ENCODE measurements at regions of chr12 and their contacts with region 1.

Region 1: DNA sequence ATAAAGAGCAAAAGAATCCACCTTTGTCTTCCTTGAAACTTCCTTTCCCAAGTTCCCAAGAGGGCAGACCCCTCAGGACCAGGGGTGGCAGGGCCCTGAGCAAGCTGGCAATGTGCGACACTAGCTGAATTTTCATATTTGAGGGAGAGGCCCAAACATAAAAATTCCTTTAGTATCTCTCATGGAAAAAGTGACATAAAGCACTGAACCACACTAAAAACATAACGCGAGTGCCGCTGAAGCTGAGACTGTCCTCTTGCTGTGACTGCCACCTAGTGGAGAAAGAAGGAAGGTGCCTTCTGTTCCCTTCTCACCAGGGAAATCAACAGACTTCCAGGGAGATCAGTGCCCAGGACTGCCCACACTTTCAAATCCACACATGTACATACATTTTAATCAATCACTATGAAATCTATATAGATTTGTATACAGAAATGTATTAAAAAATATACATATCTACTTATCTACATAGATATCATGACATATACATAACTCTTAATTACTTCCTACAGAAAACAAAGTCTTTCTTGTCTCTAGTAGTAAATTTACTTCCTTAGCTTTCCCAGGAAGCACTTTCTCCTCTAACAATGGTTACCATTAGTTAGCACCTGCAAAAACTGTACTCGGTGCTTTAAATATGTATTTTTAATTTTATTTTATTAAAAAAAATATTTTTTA is 53.8 kb downstream of the SSH1 start:
- DNase-seq: peak; percentile 57
- ATAC-seq: peak; percentile 90
- H3K4me3 ChIP-seq: no peak overlapping the region
- H3K27ac ChIP-seq: peak overlapping the region; percentile 41
- H3K4me1 ChIP-seq: peaks cover 9% of the 10 kb centered on the region; the same call in 1 of the 2 replicates
- H3K27me3 ChIP-seq: no peaks in the 10 kb centered on the region
- CTCF ChIP-seq: peak; percentile 90 to 94 (median 91)
- EP300 ChIP-seq: no peak
- POLR2A ChIP-seq: no peak
- RAD21 ChIP-seq: peak; percentile 98

Region 2: GRCh38 chr12:108518083-108518715 is 285.4 kb before region 1 on chr12:
- CTCF ChIA-PET with region 1: no interaction called
- POLR2A ChIA-PET with region 1: no interaction called
- RAD21 ChIA-PET with region 1: no interaction called
- SMC1A ChIA-PET with region 1: no interaction called
- in situ Hi-C with region 1: no loop called
- intact Hi-C with region 1: no loop called
- DNase-seq: no peak
- ATAC-seq: no peak
- H3K4me3 ChIP-seq: no peak overlapping the region
- H3K27ac ChIP-seq: no peak overlapping the region
- H3K4me1 ChIP-seq: peaks cover 9% of the 10 kb centered on the region
- H3K27me3 ChIP-seq: no peaks in the 10 kb centered on the region
- CTCF ChIP-seq: no peak
- EP300 ChIP-seq: no peak
- POLR2A ChIP-seq: peak; percentile 51
- RAD21 ChIP-seq: no peak

Region 3: DNA sequence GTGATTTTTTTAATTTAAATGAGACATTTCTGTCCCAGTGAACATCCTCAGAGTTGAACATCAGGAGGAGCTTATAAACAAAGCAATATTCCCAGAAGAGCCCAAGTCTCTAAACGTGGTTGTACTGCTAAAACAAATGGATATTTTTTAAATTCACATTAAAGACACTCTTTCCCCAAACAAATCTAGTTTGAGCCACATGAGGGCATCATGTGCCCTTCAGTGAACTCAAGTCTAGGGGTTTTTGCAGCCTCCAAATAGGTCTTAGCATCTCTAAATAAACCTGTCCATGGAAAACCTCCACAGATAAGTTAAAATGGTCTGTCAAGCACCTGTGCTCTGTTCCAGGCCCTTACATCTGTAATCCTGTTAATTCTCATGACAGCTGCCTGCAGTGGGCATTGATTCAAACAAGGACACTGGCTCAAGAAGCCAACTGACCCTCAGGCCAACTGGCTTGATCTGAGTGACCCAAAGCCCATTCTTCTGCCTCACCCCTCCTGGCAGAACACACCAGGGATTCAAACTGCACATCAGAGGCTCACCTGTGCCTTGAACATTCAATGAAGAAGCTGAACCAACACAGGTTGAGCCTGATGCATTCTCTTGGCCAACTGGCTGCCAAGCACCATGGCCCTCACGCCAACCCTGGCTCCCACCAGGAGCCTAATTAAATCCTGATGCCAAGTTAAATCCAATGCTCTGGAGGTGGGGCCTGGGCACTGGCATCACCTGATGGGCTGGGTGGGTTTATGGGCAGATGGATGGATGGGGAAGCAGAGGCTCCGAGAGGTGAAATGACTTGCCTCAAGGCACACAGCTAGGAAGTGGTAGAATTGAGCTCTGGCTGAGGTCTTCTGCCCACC is 232.6 kb before region 1 on chr12:
- CTCF ChIA-PET with region 1: interaction called, 137 read pairs
- POLR2A ChIA-PET with region 1: interaction called, 5 read pairs
- RAD21 ChIA-PET with region 1: interaction called, 44 read pairs
- SMC1A ChIA-PET with region 1: interaction called, 115 read pairs
- in situ Hi-C with region 1: loop called (anchors 5 kb)
- intact Hi-C with region 1: no loop called
- DNase-seq: no peak
- ATAC-seq: no peak
- H3K4me3 ChIP-seq: no peak overlapping the region
- H3K27ac ChIP-seq: peak overlapping the region; percentile 100
- H3K4me1 ChIP-seq: peaks cover 89% of the 10 kb centered on the region
- H3K27me3 ChIP-seq: no peaks in the 10 kb centered on the region
- CTCF ChIP-seq: peak; percentile 42 to 53 (median 49); a peak in 4 of 6 replicates
- EP300 ChIP-seq: 0 out of 4 replicates have a peak, but pooled peaks of 1 of the 2 experiments have one; percentile 10
- POLR2A ChIP-seq: no peak
- RAD21 ChIP-seq: peak; percentile 66

Region 4: DNA sequence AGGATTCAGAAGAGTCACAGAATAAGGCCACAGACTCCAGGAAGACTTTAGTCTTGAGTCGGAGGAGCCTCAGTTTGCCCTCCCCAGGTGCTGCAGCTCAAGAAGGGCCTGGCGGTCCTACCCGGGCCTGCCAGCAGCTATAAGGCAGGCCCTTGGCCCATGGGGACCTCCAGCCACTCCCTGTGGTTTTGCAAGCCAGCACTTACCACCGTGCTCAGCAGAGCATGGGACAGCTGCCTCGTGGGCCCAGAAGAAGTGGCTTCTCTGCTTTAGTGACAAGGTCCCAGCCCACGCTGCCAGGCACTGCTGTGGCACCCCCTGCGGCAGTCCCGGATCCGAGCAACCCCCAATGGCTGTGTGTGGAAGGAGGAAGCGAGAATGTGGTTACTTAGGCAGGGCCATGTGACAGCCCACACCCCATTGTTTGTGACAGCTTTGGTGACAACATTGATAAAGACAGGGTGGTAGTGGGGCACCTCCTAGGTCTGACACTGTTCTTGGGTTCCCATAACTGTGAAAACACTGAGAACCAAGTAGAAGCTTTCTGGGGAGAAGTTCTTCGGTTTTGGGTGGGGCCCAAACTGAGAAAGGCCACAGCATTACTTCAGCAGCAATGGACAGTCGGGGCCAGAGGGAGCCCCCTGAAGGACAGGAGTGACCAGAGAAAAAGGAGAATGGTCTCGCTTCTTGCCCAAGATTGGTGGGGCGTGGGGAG is 169.9 kb before region 1 on chr12 and contains the start of gene SELPLG:
- CTCF ChIA-PET with region 1: interaction called, 5 read pairs
- POLR2A ChIA-PET with region 1: interaction called, 3 read pairs
- RAD21 ChIA-PET with region 1: interaction called, 18 read pairs
- SMC1A ChIA-PET with region 1: interaction called, 27 read pairs
- in situ Hi-C with region 1: no loop called
- intact Hi-C with region 1: no loop called
- DNase-seq: peak; percentile 99
- ATAC-seq: peak; percentile 64
- H3K4me3 ChIP-seq: peak within 1 kb of the TSS; percentile 76
- H3K27ac ChIP-seq: peak within 1 kb of the TSS; percentile 86
- H3K4me1 ChIP-seq: peaks cover 87% of the 10 kb centered on the region
- H3K27me3 ChIP-seq: no peaks in the 10 kb centered on the region
- CTCF ChIP-seq: peak; percentile 32 to 41 (median 36); a peak in 3 of 6 replicates
- EP300 ChIP-seq: peak; percentile 99
- POLR2A ChIP-seq: peak; percentile 77
- RAD21 ChIP-seq: no peak; the same call in 1 of the 2 replicates
- polyA plus RNA-seq, gene SELPLG: 3.2 to 5.3 TPM

Region 5: DNA sequence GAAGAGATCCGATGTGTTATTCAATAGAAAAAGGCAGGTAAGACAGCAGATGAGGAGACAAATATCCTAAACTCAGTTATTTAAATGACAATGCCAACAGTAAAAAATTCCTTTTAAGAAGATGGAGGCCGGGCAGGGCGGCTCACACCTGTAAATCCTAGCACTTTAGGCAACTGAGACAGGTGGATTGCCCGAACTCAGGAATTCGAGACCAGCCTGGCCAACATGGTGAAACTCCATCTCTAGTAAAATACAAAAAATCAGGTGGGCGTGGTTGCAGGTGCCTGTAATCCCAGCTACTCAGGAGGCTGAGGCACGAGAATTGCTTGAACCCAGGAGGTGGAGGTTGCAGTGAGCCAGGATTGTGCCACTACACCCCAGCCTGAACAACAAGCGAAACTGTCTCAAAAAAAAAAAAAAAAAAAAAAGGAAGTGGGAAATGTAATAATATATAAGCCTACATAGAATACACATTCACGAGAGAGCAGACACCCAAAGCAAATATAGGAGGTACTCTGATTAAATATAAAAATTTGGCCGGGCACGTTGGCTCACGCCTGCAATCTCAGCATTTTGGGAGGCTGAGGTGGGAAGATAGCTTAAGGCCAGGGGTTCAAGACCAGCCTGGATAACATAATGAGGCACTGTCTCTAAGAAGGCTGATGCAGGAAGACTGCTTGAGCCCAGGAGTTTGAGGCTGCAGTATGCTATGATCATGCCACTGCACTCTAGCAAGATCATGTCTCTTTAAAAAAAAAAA is 91.2 kb before region 1 on chr12:
- CTCF ChIA-PET with region 1: interaction called, 4 read pairs
- POLR2A ChIA-PET with region 1: no interaction called
- RAD21 ChIA-PET with region 1: no interaction called
- SMC1A ChIA-PET with region 1: interaction called, 10 read pairs
- in situ Hi-C with region 1: no loop called
- intact Hi-C with region 1: no loop called
- DNase-seq: no peak
- ATAC-seq: peak; percentile 80
- H3K4me3 ChIP-seq: no peak overlapping the region
- H3K27ac ChIP-seq: peak overlapping the region; percentile 20; the same call in 1 of the 2 replicates
- H3K4me1 ChIP-seq: peaks cover 36% of the 10 kb centered on the region
- H3K27me3 ChIP-seq: no peaks in the 10 kb centered on the region
- CTCF ChIP-seq: no peak
- EP300 ChIP-seq: no peak
- POLR2A ChIP-seq: no peak
- RAD21 ChIP-seq: no peak

Region 6: GRCh38 chr12:108816652-108817335 is 13.2 kb after region 1 on chr12:
- CTCF ChIA-PET with region 1: interaction called, 33 read pairs
- POLR2A ChIA-PET with region 1: interaction called, 8 read pairs
- RAD21 ChIA-PET with region 1: interaction called, 3 read pairs
- SMC1A ChIA-PET with region 1: interaction called, 24 read pairs
- in situ Hi-C with region 1: no loop called
- intact Hi-C with region 1: no loop called
- DNase-seq: no peak
- ATAC-seq: no peak
- H3K4me3 ChIP-seq: no peak overlapping the region
- H3K27ac ChIP-seq: no peak overlapping the region
- H3K4me1 ChIP-seq: peaks cover 12% of the 10 kb centered on the region
- H3K27me3 ChIP-seq: no peaks in the 10 kb centered on the region
- CTCF ChIP-seq: no peak
- EP300 ChIP-seq: no peak
- POLR2A ChIP-seq: no peak
- RAD21 ChIP-seq: no peak

Region 7: GRCh38 chr12:108850854-108851573 is 47.4 kb after region 1 on chr12:
- CTCF ChIA-PET with region 1: interaction called, 32 read pairs
- POLR2A ChIA-PET with region 1: no interaction called
- RAD21 ChIA-PET with region 1: interaction called, 27 read pairs
- SMC1A ChIA-PET with region 1: interaction called, 22 read pairs
- in situ Hi-C with region 1: no loop called
- intact Hi-C with region 1: loop called (anchors 1 kb)
- DNase-seq: peak; percentile 79
- ATAC-seq: peak; percentile 82
- H3K4me3 ChIP-seq: no peak overlapping the region
- H3K27ac ChIP-seq: peak overlapping the region; percentile 74
- H3K4me1 ChIP-seq: peaks cover 36% of the 10 kb centered on the region
- H3K27me3 ChIP-seq: no peaks in the 10 kb centered on the region
- CTCF ChIP-seq: peak in 2 of 3 experiments; percentile 27 to 56; a peak in 4 of 6 replicates
- EP300 ChIP-seq: peak; percentile 66 to 84; a peak in 3 of 4 replicates
- POLR2A ChIP-seq: no peak
- RAD21 ChIP-seq: peak; percentile 67; the same call in 1 of the 2 replicates

Region 8: DNA sequence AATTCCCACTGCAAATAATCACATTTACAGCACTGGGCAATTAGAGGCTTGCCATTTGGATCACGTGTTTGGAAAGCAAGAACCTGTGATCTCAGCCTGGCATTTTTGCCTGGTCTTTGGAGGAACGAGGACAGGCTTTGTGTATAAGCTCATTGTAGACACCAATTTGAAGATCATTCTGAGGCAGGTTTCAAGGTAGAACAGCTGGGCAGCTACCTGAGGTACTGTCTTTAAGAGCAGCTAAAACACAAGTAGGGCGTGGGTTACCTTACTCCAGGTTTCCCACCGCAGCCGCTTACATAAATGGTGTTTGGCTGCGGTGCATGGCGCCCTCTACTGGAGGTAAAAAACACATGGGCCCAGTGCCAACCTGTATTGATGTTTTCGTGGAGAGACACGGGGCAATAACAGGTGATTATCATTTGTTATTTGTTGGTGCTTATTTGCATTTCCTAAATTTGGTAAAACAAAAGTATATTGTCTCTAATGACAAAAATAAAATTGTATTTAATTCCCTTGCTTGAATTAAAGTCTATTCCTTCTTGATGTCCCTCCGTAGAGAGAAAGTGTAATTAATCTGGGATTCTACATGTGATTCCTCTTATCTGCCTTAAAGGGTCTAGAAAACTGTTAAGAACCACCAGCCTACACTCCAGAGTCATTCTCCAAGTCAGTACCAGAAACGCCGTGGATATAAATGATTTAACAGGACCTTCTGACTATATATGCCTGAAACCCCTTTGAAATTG is 147.6 kb after region 1 on chr12:
- CTCF ChIA-PET with region 1: interaction called, 36 read pairs
- POLR2A ChIA-PET with region 1: no interaction called
- RAD21 ChIA-PET with region 1: interaction called, 12 read pairs
- SMC1A ChIA-PET with region 1: interaction called, 23 read pairs
- in situ Hi-C with region 1: loop called (anchors 5 kb)
- intact Hi-C with region 1: loop called (anchors 1 kb)
- DNase-seq: peak; percentile 38
- ATAC-seq: peak; percentile 97
- H3K4me3 ChIP-seq: no peak overlapping the region
- H3K27ac ChIP-seq: no peak overlapping the region
- H3K4me1 ChIP-seq: peaks cover 3% of the 10 kb centered on the region; the same call in 1 of the 2 replicates
- H3K27me3 ChIP-seq: no peaks in the 10 kb centered on the region; a peak in 1 of 4 replicates
- CTCF ChIP-seq: peak; percentile 85 to 87 (median 86)
- EP300 ChIP-seq: no peak
- POLR2A ChIP-seq: no peak
- RAD21 ChIP-seq: peak; percentile 92

Region 9: GRCh38 chr12:109685574-109686447 is 882.2 kb after region 1 on chr12:
- CTCF ChIA-PET with region 1: no interaction called
- POLR2A ChIA-PET with region 1: no interaction called
- RAD21 ChIA-PET with region 1: no interaction called
- SMC1A ChIA-PET with region 1: no interaction called
- in situ Hi-C with region 1: no loop called
- intact Hi-C with region 1: no loop called
- DNase-seq: no peak
- ATAC-seq: no peak
- H3K4me3 ChIP-seq: no peak overlapping the region
- H3K27ac ChIP-seq: no peak overlapping the region
- H3K4me1 ChIP-seq: no peaks in the 10 kb centered on the region
- H3K27me3 ChIP-seq: no peaks in the 10 kb centered on the region
- CTCF ChIP-seq: no peak
- EP300 ChIP-seq: no peak
- POLR2A ChIP-seq: no peak
- RAD21 ChIP-seq: no peak

Region 10: DNA sequence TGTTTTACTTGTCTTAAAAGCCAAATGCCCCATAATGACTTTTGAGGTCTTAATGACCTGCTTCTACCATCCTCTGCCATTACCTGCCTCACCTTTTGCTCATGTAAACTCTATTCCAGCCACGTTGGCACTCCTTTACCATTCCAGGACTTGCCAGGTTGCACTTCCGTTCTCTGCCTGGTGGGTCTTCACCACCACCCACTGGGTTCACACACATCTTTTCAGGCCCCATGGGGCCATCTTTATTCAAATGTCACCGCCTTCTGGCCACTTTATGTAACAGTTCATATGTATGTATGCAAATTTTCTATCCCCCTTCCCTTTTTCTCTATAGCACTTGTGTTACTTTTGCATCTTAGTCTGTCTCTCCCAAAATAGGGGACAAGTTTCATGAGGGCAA is 1535.2 kb after region 1 on chr12:
- CTCF ChIA-PET with region 1: no interaction called
- POLR2A ChIA-PET with region 1: no interaction called
- RAD21 ChIA-PET with region 1: no interaction called
- SMC1A ChIA-PET with region 1: no interaction called
- in situ Hi-C with region 1: no loop called
- intact Hi-C with region 1: no loop called
- DNase-seq: no peak
- ATAC-seq: peak; percentile 77
- H3K4me3 ChIP-seq: no peak overlapping the region
- H3K27ac ChIP-seq: no peak overlapping the region
- H3K4me1 ChIP-seq: 0 out of 2 replicates have a peak, but pooled peaks cover 4% of the 10 kb centered on the region
- H3K27me3 ChIP-seq: no peaks in the 10 kb centered on the region
- CTCF ChIP-seq: peak in 2 of 3 experiments; percentile 12 to 26; a peak in 3 of 6 replicates
- EP300 ChIP-seq: no peak
- POLR2A ChIP-seq: no peak
- RAD21 ChIP-seq: peak; percentile 46; the same call in 1 of the 2 replicates